ENCODE measurements at regions of chr4 and their contacts with region 1.

Region 1: GRCh38 chr4:37603070-37603468 is 83.1 kb downstream of the RELL1 start:
- DNase-seq: peak; percentile 91
- ATAC-seq: peak; percentile 84
- H3K4me3 Mint-ChIP-seq: no peak overlapping the region
- H3K27ac Mint-ChIP-seq: no peak overlapping the region
- H3K4me1 Mint-ChIP-seq: peaks cover 32% of the 10 kb centered on the region
- H3K27me3 Mint-ChIP-seq: peaks cover 3% of the 10 kb centered on the region; the same call in 1 of the 2 replicates
- CTCF ChIP-seq: peak; percentile 97

Region 2: GRCh38 chr4:37686373-37687193 is 83.5 kb after region 1 on chr4 and contains the start of gene RELL1:
- CTCF ChIA-PET with region 1: interaction called, 11 read pairs
- POLR2A ChIA-PET with region 1: no interaction called
- DNase-seq: peak; percentile 100
- ATAC-seq: peak; percentile 93
- H3K4me3 Mint-ChIP-seq: peak within 1 kb of the TSS; percentile 80
- H3K27ac Mint-ChIP-seq: no peak within 1 kb of the TSS; the same call in 1 of the 2 replicates
- H3K4me1 Mint-ChIP-seq: peaks cover 35% of the 10 kb centered on the region
- H3K27me3 Mint-ChIP-seq: peaks cover 25% of the 10 kb centered on the region
- CTCF ChIP-seq: no peak
- total RNA-seq, gene RELL1: 10.1 to 14.4 TPM (median 12.5 TPM) in 3 replicates

Region 3: DNA sequence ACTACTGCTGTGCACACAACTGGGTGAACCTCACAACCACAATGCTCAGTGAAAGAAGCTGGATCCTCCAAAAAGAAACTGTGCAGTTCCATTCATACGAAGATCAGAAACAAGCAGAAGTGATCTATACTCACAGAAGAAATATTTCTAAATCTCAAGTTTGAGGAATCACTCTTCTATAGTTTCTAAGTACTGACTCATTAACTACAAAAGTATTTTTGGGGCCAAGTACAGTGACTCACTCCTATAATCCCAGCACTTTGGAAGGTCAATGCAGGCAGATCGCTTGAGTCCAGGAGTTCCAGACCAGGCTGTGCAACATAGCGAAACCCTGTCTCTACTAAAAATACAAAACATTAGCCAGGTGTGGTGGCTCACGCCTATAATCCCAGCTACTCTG is 134.4 kb after region 1 on chr4:
- CTCF ChIA-PET with region 1: no interaction called
- POLR2A ChIA-PET with region 1: no interaction called
- DNase-seq: no peak
- ATAC-seq: no peak
- H3K4me3 Mint-ChIP-seq: no peak overlapping the region
- H3K27ac Mint-ChIP-seq: no peak overlapping the region
- H3K4me1 Mint-ChIP-seq: no peaks in the 10 kb centered on the region
- H3K27me3 Mint-ChIP-seq: peaks cover 4% of the 10 kb centered on the region
- CTCF ChIP-seq: no peak

Region 4: GRCh38 chr4:37802068-37802666 is 199.1 kb after region 1 on chr4:
- CTCF ChIA-PET with region 1: interaction called, 48 read pairs
- POLR2A ChIA-PET with region 1: no interaction called
- DNase-seq: peak; percentile 39
- ATAC-seq: peak; percentile 96
- H3K4me3 Mint-ChIP-seq: no peak overlapping the region
- H3K27ac Mint-ChIP-seq: no peak overlapping the region
- H3K4me1 Mint-ChIP-seq: peaks cover 20% of the 10 kb centered on the region
- H3K27me3 Mint-ChIP-seq: no peaks in the 10 kb centered on the region
- CTCF ChIP-seq: no peak

Region 5: GRCh38 chr4:37826295-37827029 is 223.4 kb after region 1 on chr4 and contains the start of gene PGM2:
- CTCF ChIA-PET with region 1: interaction called, 12 read pairs
- POLR2A ChIA-PET with region 1: no interaction called
- DNase-seq: peak; percentile 91
- ATAC-seq: peak; percentile 94
- H3K4me3 Mint-ChIP-seq: peak within 1 kb of the TSS; percentile 78
- H3K27ac Mint-ChIP-seq: peak within 1 kb of the TSS; percentile 67
- H3K4me1 Mint-ChIP-seq: peaks cover 20% of the 10 kb centered on the region
- H3K27me3 Mint-ChIP-seq: peaks cover 13% of the 10 kb centered on the region
- CTCF ChIP-seq: no peak
- total RNA-seq, gene PGM2: 28.5 to 31.4 TPM (median 30.1 TPM) in 3 replicates

Measured in WTC11 (cell line).